Dorsolateral prefrontal cortex (tissue), 120 donors: ENCODE measurements at regions of chr5 and their contacts with region 1.

Region 1: DNA sequence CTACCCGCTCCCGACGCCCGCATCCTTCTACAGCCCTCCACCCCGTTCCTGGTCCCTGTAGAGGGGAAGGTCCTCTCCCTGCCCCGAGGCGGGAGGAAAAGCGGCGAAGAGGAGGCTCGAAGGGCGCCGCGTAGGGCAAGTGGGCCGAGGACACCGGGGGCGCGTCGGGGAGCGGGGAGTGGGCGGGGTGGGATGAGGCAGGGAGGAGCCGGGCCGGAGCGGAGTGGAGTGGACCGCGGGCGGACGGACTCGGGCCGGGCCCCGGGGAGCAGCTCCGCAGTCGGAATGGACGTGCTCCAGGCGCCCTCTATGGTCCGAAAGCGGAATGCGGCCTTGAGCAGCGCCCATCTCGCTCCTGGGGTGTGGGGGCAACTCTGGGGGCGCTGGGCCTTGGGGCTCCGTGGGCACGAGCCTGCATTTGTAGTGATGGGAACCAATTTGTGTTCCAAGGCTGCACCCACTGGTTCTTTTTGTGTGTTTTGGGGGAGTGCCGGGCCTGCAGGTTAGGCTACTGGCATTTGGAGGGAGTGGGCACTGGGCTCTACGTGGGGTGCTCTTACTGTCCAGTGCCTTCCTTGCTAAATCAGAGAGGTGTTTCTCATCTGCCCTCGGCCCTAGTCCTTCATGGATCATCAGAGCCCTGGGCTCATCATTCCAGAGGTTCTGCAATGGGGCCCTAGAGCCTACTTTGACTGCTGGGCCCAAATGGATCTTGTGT is 7.3 kb downstream of the IRX1 start:
- DNase-seq: peak in 5 of 10 donors; percentile 19 to 63 (median 41)
- H3K4me3 ChIP-seq: peak overlapping the region in 20 of 59 donors; percentile 5 to 50 (median 24)
- H3K27ac ChIP-seq: no peak overlapping the region
- H3K27me3 ChIP-seq: peaks cover 16 to 99% (median 94%) of the 10 kb centered on the region in 45 donors
- CTCF ChIP-seq: peak in 54 of 56 donors; percentile 23 to 69 (median 56)

Region 2: GRCh38 chr5:2207952-2208544 is 1394.9 kb before region 1 on chr5:
- intact Hi-C with region 1: loop called in 1 of 2 experiments (anchors 10 kb)
- DNase-seq: no peak
- H3K4me3 ChIP-seq: no peak overlapping the region
- H3K27ac ChIP-seq: no peak overlapping the region
- H3K27me3 ChIP-seq: peaks cover 0 to 47% (median 8%) of the 10 kb centered on the region in 45 donors
- CTCF ChIP-seq: peak in 25 of 56 donors; percentile 3 to 42 (median 21)

Region 3: GRCh38 chr5:2751592-2752021 is 851.3 kb before region 1 on chr5 and contains the start of gene IRX2:
- intact Hi-C with region 1: loop called in 1 of 2 experiments (anchors 10 kb)
- DNase-seq: no peak
- H3K4me3 ChIP-seq: peak within 1 kb of the TSS in 37 of 59 donors; percentile 3 to 54 (median 29)
- H3K27ac ChIP-seq: no peak within 1 kb of the TSS
- H3K27me3 ChIP-seq: peaks cover 28 to 98% (median 96%) of the 10 kb centered on the region in 45 donors
- CTCF ChIP-seq: no peak
- total RNA-seq, gene IRX2: 0.17 to 0.41 (median 0.24) TPM in 15 of 120 experiments, not detected in the others

Region 4: DNA sequence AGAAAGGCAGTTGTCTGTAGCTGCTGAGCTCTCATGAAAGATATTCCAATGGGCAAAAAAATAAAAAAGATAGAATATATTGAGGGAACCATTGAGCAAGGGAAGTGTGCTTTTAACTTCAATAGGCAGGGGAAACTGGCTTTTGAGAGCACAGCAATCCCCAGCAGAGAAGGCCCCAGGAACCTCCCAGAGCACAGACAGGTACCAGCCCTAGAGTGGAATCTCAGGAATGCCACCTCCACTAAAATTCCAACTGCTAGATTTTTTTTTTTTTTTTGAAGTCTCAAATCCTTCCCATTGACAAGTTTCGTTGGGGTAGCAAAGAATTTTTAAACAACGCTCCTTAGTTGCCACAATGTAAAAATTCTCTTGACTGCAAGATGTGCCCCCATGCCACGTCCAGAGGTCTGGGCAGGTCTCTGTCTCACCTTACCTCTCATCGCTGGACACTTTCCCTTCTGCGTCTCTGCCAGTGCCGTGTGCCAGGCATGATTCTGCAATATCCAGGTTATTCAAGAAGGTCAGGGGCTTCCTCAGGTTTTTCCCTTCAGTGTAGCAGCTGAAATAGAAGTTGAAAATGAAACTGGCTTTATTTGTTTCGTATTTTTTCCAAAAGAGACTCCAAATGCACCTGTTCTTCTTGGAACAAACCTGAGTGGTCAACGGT is 71.5 kb before region 1 on chr5:
- intact Hi-C with region 1: no loop called
- DNase-seq: no peak
- H3K4me3 ChIP-seq: no peak overlapping the region
- H3K27ac ChIP-seq: no peak overlapping the region
- H3K27me3 ChIP-seq: peaks cover 0 to 14% (median 0%) of the 10 kb centered on the region in 45 donors
- CTCF ChIP-seq: no peak

Region 5: DNA sequence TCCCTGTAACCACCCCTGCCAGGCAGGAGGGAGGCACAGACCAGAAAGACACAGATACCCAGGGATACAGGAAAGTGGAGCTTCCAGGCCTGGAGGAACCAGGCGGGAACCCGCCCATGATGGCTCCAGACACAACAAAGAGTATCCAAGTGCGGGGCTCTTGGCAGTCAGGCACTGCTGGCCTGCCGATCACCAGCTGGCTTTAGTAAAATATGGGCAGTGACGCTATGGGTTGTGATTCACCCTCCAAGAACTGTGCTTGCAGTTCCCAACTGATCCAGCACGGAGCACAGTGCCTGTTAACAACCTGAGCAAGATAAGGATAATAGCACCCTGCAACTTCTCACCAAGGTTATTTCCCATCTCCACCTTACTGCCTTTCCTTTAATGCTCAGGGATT is 456.0 kb after region 1 on chr5:
- intact Hi-C with region 1: no loop called
- DNase-seq: no peak
- H3K4me3 ChIP-seq: no peak overlapping the region
- H3K27ac ChIP-seq: no peak overlapping the region
- H3K27me3 ChIP-seq: peaks cover 0 to 22% (median 0%) of the 10 kb centered on the region in 45 donors
- CTCF ChIP-seq: no peak

Region 6: DNA sequence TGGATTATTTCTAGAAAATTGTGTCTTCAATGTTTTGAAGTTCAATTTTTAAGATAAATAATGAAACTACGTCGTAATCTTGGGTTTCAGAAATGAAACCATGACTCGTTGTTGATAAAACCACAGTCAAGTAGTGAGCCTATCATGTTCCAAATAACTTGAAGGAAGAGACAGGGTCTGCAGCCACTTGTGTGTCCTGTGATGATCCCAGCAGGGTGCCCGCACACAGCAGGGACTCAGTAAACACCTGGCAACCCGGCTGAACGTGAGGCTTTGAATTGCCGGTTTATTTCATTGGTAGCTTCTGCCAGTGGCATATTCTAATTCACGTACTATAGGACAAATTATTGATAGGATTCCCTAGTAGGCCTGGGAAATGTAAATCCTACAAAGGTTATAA is 672.3 kb after region 1 on chr5:
- intact Hi-C with region 1: no loop called
- DNase-seq: no peak
- H3K4me3 ChIP-seq: no peak overlapping the region
- H3K27ac ChIP-seq: no peak overlapping the region
- H3K27me3 ChIP-seq: no peaks in the 10 kb centered on the region
- CTCF ChIP-seq: no peak